ENCODE measurements at regions of chr14 and their contacts with region 1.

Region 1: GRCh38 chr14:104375551-104376201 is 203.9 kb upstream of the C14orf180 start:
- DNase-seq: no peak
- H3K4me3 ChIP-seq: no peak overlapping the region
- H3K27ac ChIP-seq: no peak overlapping the region
- H3K4me1 ChIP-seq: no peaks in the 10 kb centered on the region
- H3K27me3 ChIP-seq: no peaks in the 10 kb centered on the region
- CTCF ChIP-seq: no peak
- POLR2A ChIP-seq: no peak

Region 2: GRCh38 chr14:104299993-104300761 is 75.5 kb before region 1 on chr14:
- intact Hi-C with region 1: loop called (anchors 2 kb)
- DNase-seq: no peak
- H3K4me3 ChIP-seq: no peak overlapping the region
- H3K27ac ChIP-seq: no peak overlapping the region
- H3K4me1 ChIP-seq: no peaks in the 10 kb centered on the region
- H3K27me3 ChIP-seq: no peaks in the 10 kb centered on the region
- CTCF ChIP-seq: no peak
- POLR2A ChIP-seq: no peak

Region 3: GRCh38 chr14:104610749-104611310 is 235.2 kb after region 1 on chr14:
- intact Hi-C with region 1: no loop called
- DNase-seq: no peak
- H3K4me3 ChIP-seq: no peak overlapping the region
- H3K27ac ChIP-seq: no peak overlapping the region
- H3K4me1 ChIP-seq: no peaks in the 10 kb centered on the region
- H3K27me3 ChIP-seq: no peaks in the 10 kb centered on the region
- CTCF ChIP-seq: no peak
- POLR2A ChIP-seq: no peak

Region 4: GRCh38 chr14:104876251-104876699 is 500.6 kb after region 1 on chr14:
- intact Hi-C with region 1: no loop called
- DNase-seq: no peak
- H3K4me3 ChIP-seq: no peak overlapping the region
- H3K27ac ChIP-seq: no peak overlapping the region
- H3K4me1 ChIP-seq: peaks cover 24% of the 10 kb centered on the region
- H3K27me3 ChIP-seq: no peaks in the 10 kb centered on the region
- CTCF ChIP-seq: no peak
- POLR2A ChIP-seq: no peak